HepG2 (cell line): ENCODE measurements at regions of chr2 and their contacts with region 1.

Region 1: GRCh38 chr2:121530212-121530705 is 421 bp upstream of the RNU4ATAC start:
- DNase-seq: peak; percentile 87
- ATAC-seq: peak; percentile 91
- H3K4me3 ChIP-seq: peak overlapping the region; percentile 77 to 91 (median 83)
- H3K27ac ChIP-seq: peak overlapping the region; percentile 98
- H3K4me1 ChIP-seq: peaks cover 68% of the 10 kb centered on the region
- H3K27me3 ChIP-seq: no peaks in the 10 kb centered on the region
- CTCF ChIP-seq: no peak
- EP300 ChIP-seq: no peak
- POLR2A ChIP-seq: peak in 1 of 2 experiments; percentile 63; a peak in 2 of 4 replicates
- RAD21 ChIP-seq: no peak; the same call in 1 of the 2 replicates

Region 2: GRCh38 chr2:121519732-121520640 is 10.3 kb before region 1 on chr2:
- CTCF ChIA-PET with region 1: no interaction called
- POLR2A ChIA-PET with region 1: interaction called, 22 read pairs
- in situ Hi-C with region 1: no loop called
- intact Hi-C with region 1: no loop called
- DNase-seq: peak; percentile 35
- ATAC-seq: peak; percentile 67
- H3K4me3 ChIP-seq: no peak overlapping the region
- H3K27ac ChIP-seq: no peak overlapping the region
- H3K4me1 ChIP-seq: no peaks in the 10 kb centered on the region
- H3K27me3 ChIP-seq: no peaks in the 10 kb centered on the region
- CTCF ChIP-seq: no peak
- EP300 ChIP-seq: no peak
- POLR2A ChIP-seq: no peak
- RAD21 ChIP-seq: no peak

Region 3: GRCh38 chr2:121596221-121597080 is 66.2 kb after region 1 on chr2:
- CTCF ChIA-PET with region 1: interaction called, 3 read pairs
- POLR2A ChIA-PET with region 1: interaction called, 23 read pairs
- in situ Hi-C with region 1: no loop called
- intact Hi-C with region 1: loop called (anchors 1 kb)
- DNase-seq: peak; percentile 67
- ATAC-seq: peak; percentile 46
- H3K4me3 ChIP-seq: no peak overlapping the region
- H3K27ac ChIP-seq: peak overlapping the region; percentile 32
- H3K4me1 ChIP-seq: peaks cover 44% of the 10 kb centered on the region
- H3K27me3 ChIP-seq: no peaks in the 10 kb centered on the region
- CTCF ChIP-seq: peak; percentile 72
- EP300 ChIP-seq: no peak
- POLR2A ChIP-seq: no peak
- RAD21 ChIP-seq: peak; percentile 38; the same call in 1 of the 2 replicates

Region 4: DNA sequence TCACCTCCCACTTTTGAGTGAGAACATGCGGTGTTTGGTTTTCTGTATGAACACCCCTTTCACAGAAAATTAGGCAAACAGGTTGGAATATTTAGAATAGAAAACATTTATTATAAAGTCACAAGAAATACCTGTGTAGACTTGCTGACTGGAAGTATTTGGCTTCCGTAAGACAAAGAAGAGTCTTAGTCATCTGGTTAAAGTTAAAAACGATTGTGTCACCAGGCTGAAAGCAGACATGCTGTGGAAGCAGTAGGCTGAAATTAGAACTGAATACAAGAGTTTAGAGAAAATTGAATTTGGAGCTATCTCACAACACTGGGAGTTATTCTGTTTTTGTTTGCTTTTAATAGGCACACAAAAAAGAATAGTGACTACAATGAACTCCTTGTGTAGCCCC is 135.2 kb after region 1 on chr2:
- CTCF ChIA-PET with region 1: no interaction called
- POLR2A ChIA-PET with region 1: interaction called, 12 read pairs
- in situ Hi-C with region 1: no loop called
- intact Hi-C with region 1: no loop called
- DNase-seq: no peak
- ATAC-seq: peak; percentile 25; the same call in 1 of the 3 replicates
- H3K4me3 ChIP-seq: no peak overlapping the region
- H3K27ac ChIP-seq: no peak overlapping the region
- H3K4me1 ChIP-seq: peaks cover 16% of the 10 kb centered on the region
- H3K27me3 ChIP-seq: no peaks in the 10 kb centered on the region
- CTCF ChIP-seq: no peak
- EP300 ChIP-seq: no peak
- POLR2A ChIP-seq: no peak
- RAD21 ChIP-seq: no peak

Region 5: DNA sequence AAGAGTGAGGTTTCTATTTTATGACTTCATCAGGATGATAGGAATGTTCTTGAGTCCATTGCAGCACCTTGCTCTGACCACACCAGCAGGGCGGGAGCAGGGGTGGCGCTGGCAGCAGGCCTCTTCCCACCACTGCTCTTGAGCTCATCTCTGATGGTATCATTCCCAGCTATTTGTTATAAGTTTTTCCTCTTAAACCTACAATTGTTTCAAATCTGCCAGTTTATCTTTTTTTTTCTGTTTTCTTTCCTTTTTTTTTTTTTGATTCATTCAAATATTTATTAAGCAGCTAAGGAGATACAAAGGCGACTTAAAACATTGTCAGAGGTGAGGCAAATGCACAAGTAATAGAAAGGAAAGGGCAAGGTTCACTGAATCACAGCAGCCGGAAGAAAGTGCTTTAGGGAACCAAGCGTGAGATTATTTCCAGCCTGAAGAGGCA is 177.7 kb after region 1 on chr2:
- CTCF ChIA-PET with region 1: no interaction called
- POLR2A ChIA-PET with region 1: interaction called, 36 read pairs
- in situ Hi-C with region 1: no loop called
- intact Hi-C with region 1: no loop called
- DNase-seq: peak; percentile 43
- ATAC-seq: peak; percentile 87
- H3K4me3 ChIP-seq: peak overlapping the region; percentile 51 to 70 (median 51)
- H3K27ac ChIP-seq: peak overlapping the region; percentile 11
- H3K4me1 ChIP-seq: peaks cover 56% of the 10 kb centered on the region
- H3K27me3 ChIP-seq: peaks cover 0 to 16% of the 10 kb centered on the region in 2 experiments; a peak in 2 of 5 replicates
- CTCF ChIP-seq: no peak
- EP300 ChIP-seq: no peak
- POLR2A ChIP-seq: no peak
- RAD21 ChIP-seq: no peak

Region 6: DNA sequence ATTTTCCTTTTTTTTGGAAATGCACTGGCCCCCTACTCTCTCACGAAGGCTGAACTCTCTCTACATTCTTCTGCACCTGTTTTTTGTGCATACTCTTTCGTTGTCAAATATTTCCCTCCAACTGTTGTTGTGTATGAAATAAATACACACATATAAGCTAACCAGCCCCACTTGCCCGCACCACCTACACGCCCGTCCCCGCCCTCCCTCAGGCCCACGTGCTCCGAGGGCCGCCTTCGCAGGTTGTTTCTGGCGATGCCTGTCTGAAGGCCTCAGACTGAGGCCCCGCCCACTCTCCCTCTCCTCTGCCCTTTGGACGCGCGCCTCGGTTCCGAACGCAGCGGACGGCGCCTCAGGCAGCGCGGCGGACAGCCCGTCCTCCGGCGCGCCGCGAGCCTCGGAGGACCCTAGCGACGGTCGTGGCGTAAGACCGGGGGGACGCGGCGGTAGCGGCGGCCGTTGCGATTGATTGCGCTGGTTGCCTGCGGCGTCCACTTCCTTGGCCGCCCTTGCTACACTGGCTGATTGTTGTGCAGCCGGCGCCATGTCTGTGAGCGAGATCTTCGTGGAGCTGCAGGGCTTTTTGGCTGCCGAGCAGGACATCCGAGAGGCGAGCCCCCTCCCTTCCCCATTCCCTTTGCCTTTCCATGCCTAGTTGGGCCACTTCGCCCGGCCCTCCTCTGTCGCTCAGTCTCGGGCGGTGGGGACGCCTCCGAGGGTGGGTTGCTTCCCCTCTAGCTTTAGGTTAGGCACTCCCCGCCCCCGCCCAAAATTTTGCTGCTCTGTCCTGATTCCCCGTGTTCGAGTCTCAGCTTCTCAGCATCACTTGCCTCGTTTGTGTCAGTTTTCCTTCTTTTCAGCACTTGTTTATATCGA is 225.2 kb after region 1 on chr2 and contains the start of gene TSN:
- CTCF ChIA-PET with region 1: no interaction called
- POLR2A ChIA-PET with region 1: interaction called, 15 read pairs
- in situ Hi-C with region 1: no loop called
- intact Hi-C with region 1: loop called (anchors 2 kb)
- DNase-seq: peak; percentile 97
- ATAC-seq: peak; percentile 98
- H3K4me3 ChIP-seq: peak within 1 kb of the TSS; percentile 92 to 98 (median 95)
- H3K27ac ChIP-seq: peak within 1 kb of the TSS; percentile 82
- H3K4me1 ChIP-seq: peaks cover 24% of the 10 kb centered on the region
- H3K27me3 ChIP-seq: peaks cover 0 to 4% of the 10 kb centered on the region in 2 experiments; a peak in 2 of 5 replicates
- CTCF ChIP-seq: peak; percentile 3; the same call in 1 of the 2 replicates
- EP300 ChIP-seq: 0 out of 4 replicates have a peak, but pooled peaks of 1 of the 2 experiments have one; percentile 24
- POLR2A ChIP-seq: peak; percentile 87 to 88
- RAD21 ChIP-seq: peak; percentile 45
- total RNA-seq, gene TSN: 115 and 159 TPM in 2 replicates

Region 7: GRCh38 chr2:121902171-121902591 is 371.9 kb after region 1 on chr2:
- CTCF ChIA-PET with region 1: no interaction called
- POLR2A ChIA-PET with region 1: no interaction called
- in situ Hi-C with region 1: no loop called
- intact Hi-C with region 1: no loop called
- DNase-seq: no peak
- ATAC-seq: peak; percentile 40; the same call in 2 of the 3 replicates
- H3K4me3 ChIP-seq: no peak overlapping the region
- H3K27ac ChIP-seq: no peak overlapping the region
- H3K4me1 ChIP-seq: no peaks in the 10 kb centered on the region
- H3K27me3 ChIP-seq: peaks cover 6 to 51% of the 10 kb centered on the region in 2 experiments
- CTCF ChIP-seq: peak; percentile 30
- EP300 ChIP-seq: no peak
- POLR2A ChIP-seq: no peak
- RAD21 ChIP-seq: no peak